ENCODE measurements at regions of chr1 and their contacts with region 1.

Region 1: DNA sequence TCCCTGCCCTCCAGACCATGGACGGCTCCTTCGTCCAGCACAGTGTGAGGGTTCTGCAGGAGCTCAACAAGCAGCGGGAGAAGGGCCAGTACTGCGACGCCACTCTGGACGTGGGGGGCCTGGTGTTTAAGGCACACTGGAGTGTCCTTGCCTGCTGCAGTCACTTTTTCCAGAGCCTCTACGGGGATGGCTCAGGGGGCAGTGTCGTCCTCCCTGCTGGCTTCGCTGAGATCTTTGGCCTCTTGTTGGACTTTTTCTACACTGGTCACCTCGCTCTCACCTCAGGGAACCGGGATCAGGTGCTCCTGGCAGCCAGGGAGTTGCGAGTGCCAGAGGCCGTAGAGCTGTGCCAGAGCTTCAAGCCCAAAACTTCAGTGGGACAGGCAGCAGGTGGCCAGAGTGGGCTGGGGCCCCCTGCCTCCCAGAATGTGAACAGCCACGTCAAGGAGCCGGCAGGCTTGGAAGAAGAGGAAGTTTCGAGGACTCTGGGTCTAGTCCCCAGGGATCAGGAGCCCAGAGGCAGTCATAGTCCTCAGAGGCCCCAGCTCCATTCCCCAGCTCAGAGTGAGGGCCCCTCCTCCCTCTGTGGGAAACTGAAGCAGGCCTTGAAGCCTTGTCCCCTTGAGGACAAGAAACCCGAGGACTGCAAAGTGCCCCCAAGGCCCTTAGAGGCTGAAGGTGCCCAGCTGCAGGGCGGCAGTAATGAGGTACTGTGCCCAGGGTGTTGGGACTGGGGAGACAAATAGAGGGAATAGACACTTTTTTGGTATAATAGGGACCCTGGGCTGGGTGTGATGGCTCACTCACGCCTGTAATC is 1.0 kb downstream of the ZBTB48 start:
- DNase-seq: no peak
- ATAC-seq: no peak
- H3K4me3 ChIP-seq: peak overlapping the region; percentile 86 to 90
- H3K27ac ChIP-seq: peak overlapping the region; percentile 93
- H3K4me1 ChIP-seq: peaks cover 23% of the 10 kb centered on the region
- H3K27me3 ChIP-seq: no peaks in the 10 kb centered on the region
- CTCF ChIP-seq: no peak

Region 2: GRCh38 chr1:6504887-6505286 is 75.9 kb before region 1 on chr1:
- CTCF ChIA-PET with region 1: no interaction called
- POLR2A ChIA-PET with region 1: interaction called, 13 read pairs
- in situ Hi-C with region 1: no loop called
- intact Hi-C with region 1: no loop called
- DNase-seq: no peak
- ATAC-seq: no peak
- H3K4me3 ChIP-seq: no peak overlapping the region
- H3K27ac ChIP-seq: no peak overlapping the region
- H3K4me1 ChIP-seq: no peaks in the 10 kb centered on the region
- H3K27me3 ChIP-seq: no peaks in the 10 kb centered on the region
- CTCF ChIP-seq: no peak

Region 3: DNA sequence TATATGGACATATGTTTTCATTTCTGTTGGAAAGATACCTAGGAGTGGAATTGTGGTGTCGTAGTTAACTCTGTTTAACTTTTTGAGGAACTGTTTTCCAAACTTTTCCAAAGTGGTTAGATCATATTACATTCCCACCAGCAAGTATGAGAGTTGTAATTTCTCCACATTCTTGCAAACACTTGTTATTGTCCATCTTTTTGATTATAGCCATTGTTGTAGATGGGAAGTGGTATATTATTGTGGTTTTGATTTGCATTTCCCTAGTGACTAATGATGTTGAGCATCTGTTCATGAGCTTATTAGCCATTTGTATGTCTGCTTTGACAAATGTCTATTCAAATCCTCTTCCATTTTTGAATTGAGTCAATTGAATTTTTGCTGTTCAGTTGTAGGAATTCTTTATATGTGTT is 224.2 kb after region 1 on chr1:
- CTCF ChIA-PET with region 1: no interaction called
- POLR2A ChIA-PET with region 1: no interaction called
- in situ Hi-C with region 1: no loop called
- intact Hi-C with region 1: no loop called
- DNase-seq: no peak
- ATAC-seq: no peak
- H3K4me3 ChIP-seq: no peak overlapping the region
- H3K27ac ChIP-seq: no peak overlapping the region
- H3K4me1 ChIP-seq: peaks cover 10% of the 10 kb centered on the region
- H3K27me3 ChIP-seq: no peaks in the 10 kb centered on the region
- CTCF ChIP-seq: no peak

Region 4: GRCh38 chr1:7727809-7728471 is 1147.1 kb after region 1 on chr1:
- CTCF ChIA-PET with region 1: no interaction called
- POLR2A ChIA-PET with region 1: no interaction called
- in situ Hi-C with region 1: no loop called
- intact Hi-C with region 1: no loop called
- DNase-seq: no peak
- ATAC-seq: no peak
- H3K4me3 ChIP-seq: no peak overlapping the region
- H3K27ac ChIP-seq: no peak overlapping the region
- H3K4me1 ChIP-seq: no peaks in the 10 kb centered on the region
- H3K27me3 ChIP-seq: no peaks in the 10 kb centered on the region
- CTCF ChIP-seq: no peak

Measured in Panc1 (cell line).